Natural killer cell (primary cell): ENCODE measurements at regions of chr16 and their contacts with region 1.

Region 1: DNA sequence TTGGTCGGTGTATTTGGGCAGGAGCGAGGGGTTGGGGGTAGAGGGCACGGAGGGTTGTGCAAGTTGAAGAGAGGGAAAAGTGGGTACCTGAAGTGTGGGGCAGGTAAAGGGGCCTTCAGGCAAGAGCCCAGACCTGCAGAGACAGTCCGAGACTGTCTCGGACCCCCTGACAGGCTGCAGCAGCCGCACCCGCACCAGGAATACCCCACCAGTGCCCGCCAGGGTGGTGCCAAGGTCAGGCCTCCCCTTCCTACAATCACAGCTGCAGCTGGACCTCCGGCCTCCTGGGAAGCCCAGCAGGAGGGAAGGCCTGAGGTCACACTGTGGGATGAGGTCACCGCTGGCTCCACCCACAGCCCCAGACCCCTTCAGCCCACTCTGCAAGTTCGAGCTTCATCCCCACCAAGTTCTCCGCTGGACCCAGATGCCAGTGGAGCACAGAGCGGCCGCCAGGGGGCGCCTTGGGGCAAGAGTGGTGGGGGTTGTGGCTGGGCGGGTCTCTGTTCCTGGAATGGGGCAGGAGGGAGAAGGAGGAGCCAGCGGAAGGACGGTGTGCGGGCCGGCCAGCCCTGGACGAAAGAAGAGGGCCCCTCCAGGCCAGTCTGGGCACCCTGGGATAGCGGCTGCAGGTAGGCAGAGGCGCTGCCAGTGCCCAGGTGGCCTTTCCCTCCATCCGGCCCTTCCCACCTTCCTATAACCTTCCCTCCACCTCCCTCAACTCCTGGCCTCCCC is at the start of gene HSD3B7:
- DNase-seq: peak; percentile 76 to 84
- ATAC-seq: peak; percentile 75 to 92 (median 82)
- H3K4me3 ChIP-seq: no peak within 1 kb of the TSS
- H3K4me3 Mint-ChIP-seq: no peak within 1 kb of the TSS
- H3K27ac ChIP-seq: no peak within 1 kb of the TSS
- H3K27ac Mint-ChIP-seq: no peak within 1 kb of the TSS
- H3K4me1 ChIP-seq: peaks cover 9% of the 10 kb centered on the region
- H3K4me1 Mint-ChIP-seq: peaks cover 0 to 20% of the 10 kb centered on the region in 2 donors
- H3K27me3 ChIP-seq: no peaks in the 10 kb centered on the region
- H3K27me3 Mint-ChIP-seq: no peaks in the 10 kb centered on the region
- CTCF ChIP-seq: peak; percentile 85
- total RNA-seq, gene HSD3B7: 0.26 to 2.1 (median 0.39) TPM

Region 2: GRCh38 chr16:31094424-31095120 is 109.7 kb after region 1 on chr16 and contains the start of gene VKORC1:
- intact Hi-C with region 1: loop called (anchors 1 kb)
- DNase-seq: peak; percentile 69 to 93
- ATAC-seq: peak; percentile 78 to 89 (median 82)
- H3K4me3 ChIP-seq: peak within 1 kb of the TSS; percentile 87
- H3K4me3 Mint-ChIP-seq: peak within 1 kb of the TSS; percentile 87
- H3K27ac ChIP-seq: peak within 1 kb of the TSS; percentile 67
- H3K27ac Mint-ChIP-seq: peak within 1 kb of the TSS; percentile 84 to 90
- H3K4me1 ChIP-seq: peaks cover 26% of the 10 kb centered on the region
- H3K4me1 Mint-ChIP-seq: peaks cover 22 to 24% of the 10 kb centered on the region in 2 donors
- H3K27me3 ChIP-seq: no peaks in the 10 kb centered on the region
- H3K27me3 Mint-ChIP-seq: no peaks in the 10 kb centered on the region
- CTCF ChIP-seq: no peak
- total RNA-seq, gene VKORC1: 35.9 to 42.1 (median 41.8) TPM

Region 3: GRCh38 chr16:31142109-31143010 is 157.5 kb after region 1 on chr16:
- intact Hi-C with region 1: loop called (anchors 2 kb)
- DNase-seq: peak; percentile 86 to 98
- ATAC-seq: peak; percentile 86 to 97 (median 88)
- H3K4me3 ChIP-seq: peak overlapping the region; percentile 6
- H3K4me3 Mint-ChIP-seq: peak overlapping the region; percentile 75
- H3K27ac ChIP-seq: peak overlapping the region; percentile 62
- H3K27ac Mint-ChIP-seq: peak overlapping the region; percentile 76 to 82
- H3K4me1 ChIP-seq: peaks cover 19% of the 10 kb centered on the region
- H3K4me1 Mint-ChIP-seq: peaks cover 15 to 22% of the 10 kb centered on the region in 2 donors
- H3K27me3 ChIP-seq: no peaks in the 10 kb centered on the region
- H3K27me3 Mint-ChIP-seq: no peaks in the 10 kb centered on the region
- CTCF ChIP-seq: peak; percentile 87

Region 4: GRCh38 chr16:31333686-31334649 is 349.1 kb after region 1 on chr16:
- intact Hi-C with region 1: loop called (anchors 1 kb)
- DNase-seq: peak in 1 of 2 donors; percentile 58
- ATAC-seq: peak; percentile 81 to 88 (median 84)
- H3K4me3 ChIP-seq: no peak overlapping the region
- H3K4me3 Mint-ChIP-seq: no peak overlapping the region
- H3K27ac ChIP-seq: no peak overlapping the region
- H3K27ac Mint-ChIP-seq: peak overlapping the region; percentile 53 to 79
- H3K4me1 ChIP-seq: peaks cover 21% of the 10 kb centered on the region
- H3K4me1 Mint-ChIP-seq: peaks cover 37 to 39% of the 10 kb centered on the region in 2 donors
- H3K27me3 ChIP-seq: no peaks in the 10 kb centered on the region
- H3K27me3 Mint-ChIP-seq: peaks cover 4 to 6% of the 10 kb centered on the region in 2 donors
- CTCF ChIP-seq: peak; percentile 21

Region 5: GRCh38 chr16:31868691-31869167 is 883.9 kb after region 1 on chr16:
- intact Hi-C with region 1: loop called (anchors 2 kb)
- DNase-seq: peak; percentile 75 to 89
- ATAC-seq: peak; percentile 40 to 49 (median 45)
- H3K4me3 ChIP-seq: no peak overlapping the region
- H3K4me3 Mint-ChIP-seq: peak overlapping the region; percentile 25
- H3K27ac ChIP-seq: peak overlapping the region; percentile 64
- H3K27ac Mint-ChIP-seq: peak overlapping the region; percentile 57 to 74
- H3K4me1 ChIP-seq: peaks cover 23% of the 10 kb centered on the region
- H3K4me1 Mint-ChIP-seq: peaks cover 19 to 23% of the 10 kb centered on the region in 2 donors
- H3K27me3 ChIP-seq: no peaks in the 10 kb centered on the region
- H3K27me3 Mint-ChIP-seq: peaks cover 0 to 2% of the 10 kb centered on the region in 2 donors
- CTCF ChIP-seq: peak; percentile 93